Prostate gland (tissue), 2 donors: ENCODE measurements at regions of chr22 and their contacts with region 1.

Region 1: DNA sequence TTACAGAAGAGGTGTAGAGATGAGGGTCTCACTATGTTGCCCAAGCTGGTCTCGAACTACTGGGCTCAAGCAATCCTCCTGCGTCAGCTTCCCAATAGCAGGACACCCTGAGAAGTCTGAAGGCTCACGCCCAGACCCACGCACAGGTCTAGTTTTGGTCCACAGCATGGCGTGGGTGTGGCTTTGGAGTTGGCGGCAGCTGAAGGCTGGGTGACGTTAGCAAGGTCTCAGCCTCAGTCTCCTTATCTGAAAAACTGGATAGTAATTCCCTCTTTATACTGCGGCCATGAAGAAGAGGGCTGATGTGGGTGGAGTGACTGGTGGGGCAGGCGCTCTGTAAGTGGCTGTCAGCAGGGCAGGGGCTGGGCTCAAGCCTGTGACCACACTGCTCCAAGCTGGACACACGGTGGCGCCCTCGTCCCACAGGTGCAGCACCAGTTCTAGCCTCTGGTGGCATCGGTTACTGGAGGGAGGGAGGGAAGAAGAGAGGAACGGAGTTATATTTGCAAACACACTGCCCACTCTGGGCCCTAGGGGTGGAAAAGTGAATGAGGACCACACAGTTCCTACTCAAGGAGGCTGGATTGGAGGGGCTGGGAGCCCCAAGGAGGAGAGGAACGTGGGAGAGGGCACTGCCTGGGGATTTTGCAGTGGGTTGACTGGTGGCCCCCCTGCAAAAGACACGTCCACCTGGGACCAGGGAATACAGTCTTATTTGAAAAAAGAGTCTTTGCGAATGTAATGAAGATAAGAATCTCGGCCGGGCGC is 19.6 kb upstream of the CARD10 start:
- DNase-seq: peak; percentile 89
- H3K4me3 ChIP-seq: no peak overlapping the region
- H3K27ac ChIP-seq: no peak overlapping the region
- H3K4me1 ChIP-seq: no peaks in the 10 kb centered on the region
- H3K27me3 ChIP-seq: no peaks in the 10 kb centered on the region
- CTCF ChIP-seq: peak; percentile 74 to 100 (median 91)
- POLR2A ChIP-seq: no peak

Region 2: GRCh38 chr22:37566903-37567820 is 28.4 kb after region 1 on chr22:
- intact Hi-C with region 1: loop called (anchors 2 kb)
- DNase-seq: peak; percentile 90
- H3K4me3 ChIP-seq: no peak overlapping the region
- H3K27ac ChIP-seq: peak overlapping the region; percentile 38 to 42
- H3K4me1 ChIP-seq: peaks cover 18% of the 10 kb centered on the region
- H3K27me3 ChIP-seq: no peaks in the 10 kb centered on the region
- CTCF ChIP-seq: peak; percentile 92 to 99 (median 98)
- POLR2A ChIP-seq: no peak

Region 3: DNA sequence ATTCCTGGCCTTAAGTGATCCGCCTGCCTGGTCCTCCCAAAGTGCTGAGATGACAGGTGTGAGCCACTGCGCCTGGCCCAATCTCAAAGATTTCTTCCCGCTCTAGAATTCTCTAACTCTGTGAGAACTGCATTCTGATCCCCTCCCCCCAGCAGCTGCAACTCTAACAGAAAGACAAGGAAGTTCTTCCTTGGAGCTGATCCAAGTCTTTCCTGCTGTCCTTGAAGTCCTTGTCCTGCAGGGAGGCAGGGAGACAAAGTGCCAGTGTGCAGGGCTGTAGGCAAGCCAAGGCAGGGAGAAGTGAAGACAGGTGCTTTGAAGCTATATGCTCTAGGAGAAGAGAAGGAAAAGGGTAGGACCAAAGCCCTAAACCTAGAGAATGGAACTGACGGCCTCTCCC is 60.4 kb after region 1 on chr22:
- intact Hi-C with region 1: loop called (anchors 10 kb)
- DNase-seq: peak; percentile 62
- H3K4me3 ChIP-seq: no peak overlapping the region
- H3K27ac ChIP-seq: peak overlapping the region in 1 of 2 donors; percentile 31
- H3K4me1 ChIP-seq: no peaks in the 10 kb centered on the region
- H3K27me3 ChIP-seq: no peaks in the 10 kb centered on the region
- CTCF ChIP-seq: no peak
- POLR2A ChIP-seq: no peak